ENCODE measurements at regions of chr3 and their contacts with region 1.

Region 1: DNA sequence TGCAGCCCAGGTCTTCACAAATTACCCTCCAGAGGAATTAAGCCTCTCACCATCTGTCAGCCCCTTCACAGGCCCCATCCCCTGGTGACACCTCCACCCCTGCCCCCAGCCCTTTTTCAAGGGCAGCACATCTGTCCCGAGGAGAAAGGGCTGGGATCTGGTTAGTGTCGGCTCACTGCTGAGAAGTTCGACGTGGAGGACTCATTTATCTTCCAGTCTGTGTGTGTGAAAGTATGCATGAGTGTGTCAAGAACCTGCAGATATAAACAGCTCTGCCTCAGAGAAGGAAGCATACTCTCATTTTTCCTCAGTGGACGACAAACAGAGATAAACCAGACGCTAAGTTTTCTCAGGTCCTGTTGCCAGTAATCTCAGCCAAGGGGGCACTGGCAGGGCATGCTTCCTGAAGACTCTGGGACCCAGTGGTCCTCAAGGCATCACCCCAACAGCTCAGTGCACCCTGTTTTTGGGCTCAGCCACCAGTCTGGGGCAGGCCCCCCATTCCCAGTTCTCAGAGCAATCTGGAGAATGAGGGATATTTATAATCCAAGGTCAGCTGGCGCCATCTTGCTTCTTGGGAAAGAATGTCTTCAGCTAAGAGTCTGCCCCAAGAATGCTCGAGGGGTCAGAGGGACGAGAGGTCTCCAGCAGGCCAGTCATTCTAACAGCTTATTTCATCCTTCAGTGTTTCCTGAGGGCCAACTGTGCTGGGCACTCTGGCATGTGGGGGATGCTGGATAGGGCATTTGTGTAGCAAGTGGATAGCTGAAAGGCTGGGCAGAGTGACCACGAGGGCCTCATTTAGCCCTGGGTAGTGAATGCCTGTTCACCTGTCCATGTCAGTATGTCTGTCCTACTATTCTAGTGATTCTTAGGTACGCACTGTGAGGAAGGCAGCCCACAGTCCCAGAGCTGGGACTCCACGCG is 73.6 kb downstream of the ADCY5 start:
- DNase-seq: no peak
- H3K4me3 ChIP-seq: no peak overlapping the region
- H3K27me3 ChIP-seq: peaks cover 23% of the 10 kb centered on the region
- CTCF ChIP-seq: no peak

Region 2: DNA sequence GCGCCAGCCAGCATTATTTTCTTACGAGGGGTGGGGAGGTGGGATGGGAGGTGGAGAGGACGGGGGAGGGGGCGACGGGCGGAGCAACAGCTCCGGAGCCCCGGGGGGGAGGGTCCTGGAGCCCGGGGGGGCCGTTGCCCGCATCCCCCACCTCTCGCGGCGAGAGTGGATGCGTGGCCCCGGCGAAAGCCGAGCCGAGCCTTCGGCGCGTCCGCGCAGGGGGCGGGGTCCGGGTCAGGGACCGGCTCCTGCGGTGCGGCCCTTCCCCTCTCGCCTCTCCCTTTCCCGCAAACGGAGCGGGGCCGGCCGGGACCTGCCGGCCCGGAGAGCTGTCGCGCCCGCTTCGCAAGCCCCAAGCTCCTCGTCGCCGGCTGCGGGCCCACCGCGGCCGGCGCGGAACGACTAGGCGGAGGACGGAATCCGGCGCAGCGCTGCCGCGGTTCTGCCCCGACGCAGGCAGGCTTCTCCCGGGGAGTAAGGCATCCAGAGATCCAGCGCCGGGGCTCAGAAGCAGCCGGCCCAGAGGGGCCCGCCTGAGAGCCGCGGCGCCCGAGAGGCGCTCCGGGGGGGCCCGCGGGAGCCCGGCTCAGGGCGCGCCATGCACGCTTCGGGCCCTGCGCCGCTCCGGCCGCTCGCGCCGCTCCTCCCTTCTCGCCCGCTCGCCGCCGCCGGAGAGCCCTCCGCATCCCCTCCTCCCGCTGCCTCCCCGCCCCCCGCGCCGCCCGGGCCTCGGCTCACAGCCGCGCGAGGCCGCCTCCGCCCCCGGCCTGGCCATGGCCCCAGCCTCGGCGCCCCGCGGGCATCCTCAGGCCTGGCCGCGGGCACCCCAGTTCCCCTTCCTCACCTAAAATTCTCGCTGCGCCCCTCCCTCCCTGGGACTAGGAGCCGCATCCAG is 74.1 kb after region 1 on chr3:
- CTCF ChIA-PET with region 1: no interaction called
- POLR2A ChIA-PET with region 1: interaction called, 10 read pairs
- DNase-seq: no peak
- H3K4me3 ChIP-seq: peak overlapping the region; percentile 55
- H3K27me3 ChIP-seq: peaks cover 34% of the 10 kb centered on the region
- CTCF ChIP-seq: no peak